GM12878 (cell line): ENCODE measurements at regions of chr20 and their contacts with region 1.

Region 1: DNA sequence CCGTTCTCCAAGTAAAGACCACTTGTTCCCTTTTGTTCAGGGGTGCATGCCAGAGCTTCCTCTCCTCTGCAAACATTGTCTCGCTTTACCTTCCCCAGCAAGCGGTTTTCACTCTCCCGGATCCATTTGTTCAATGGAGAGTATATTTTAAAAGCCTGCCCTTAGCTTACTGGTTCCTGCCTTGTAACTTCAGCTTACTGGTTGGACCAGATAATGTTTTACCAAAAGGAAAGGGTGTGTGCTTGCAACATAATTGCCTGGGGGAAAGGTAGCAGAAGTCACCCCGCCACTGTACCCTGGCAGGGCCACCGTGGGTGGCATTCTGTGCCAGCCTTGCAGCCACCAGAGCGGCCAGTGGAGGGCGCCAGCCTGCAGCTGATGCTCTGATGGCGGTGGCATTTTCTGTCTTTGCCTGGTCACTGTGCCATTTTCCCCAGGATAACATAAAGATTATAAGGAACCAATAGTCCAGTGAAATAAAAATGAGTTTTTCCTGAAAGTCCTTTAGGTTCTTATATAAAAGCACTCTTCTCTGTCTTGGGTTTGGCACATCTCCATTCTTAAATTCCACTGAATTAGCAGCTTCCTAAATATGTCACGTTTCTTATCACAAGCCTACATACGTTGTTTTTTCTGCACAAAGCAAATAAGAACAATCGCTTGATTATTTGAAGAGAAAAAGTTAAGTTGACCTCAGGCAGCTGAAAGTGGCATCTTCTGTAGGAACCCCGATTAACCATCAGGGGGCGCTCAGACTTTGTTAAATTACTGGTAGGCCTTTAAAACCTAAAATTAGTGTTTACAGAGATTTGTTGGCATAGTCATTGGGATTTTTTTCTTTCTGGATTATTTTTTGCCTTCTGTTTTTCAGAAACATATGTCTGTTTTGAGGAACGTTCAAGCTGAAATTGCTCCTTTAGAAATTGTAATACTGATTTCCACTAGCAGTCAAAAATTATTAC is 67.4 kb upstream of the XRN2 start:
- DNase-seq: no peak
- ATAC-seq: peak; percentile 82
- H3K4me3 ChIP-seq: no peak overlapping the region
- H3K27ac ChIP-seq: no peak overlapping the region
- H3K4me1 ChIP-seq: no peaks in the 10 kb centered on the region
- H3K27me3 ChIP-seq: no peaks in the 10 kb centered on the region
- CTCF ChIP-seq: peak; percentile 74 to 89 (median 78)
- EP300 ChIP-seq: no peak
- POLR2A ChIP-seq: no peak
- RAD21 ChIP-seq: peak; percentile 85

Region 2: GRCh38 chr20:20860078-20860806 is 375.5 kb before region 1 on chr20:
- CTCF ChIA-PET with region 1: interaction called, 27 read pairs
- POLR2A ChIA-PET with region 1: no interaction called
- RAD21 ChIA-PET with region 1: interaction called, 3 read pairs
- SMC1A ChIA-PET with region 1: interaction called, 8 read pairs
- in situ Hi-C with region 1: loop called (anchors 10 kb)
- intact Hi-C with region 1: loop called (anchors 10 kb)
- DNase-seq: peak; percentile 15
- ATAC-seq: peak; percentile 98
- H3K4me3 ChIP-seq: no peak overlapping the region
- H3K27ac ChIP-seq: no peak overlapping the region
- H3K4me1 ChIP-seq: no peaks in the 10 kb centered on the region
- H3K27me3 ChIP-seq: no peaks in the 10 kb centered on the region
- CTCF ChIP-seq: peak; percentile 85 to 94 (median 88)
- EP300 ChIP-seq: no peak
- POLR2A ChIP-seq: no peak
- RAD21 ChIP-seq: peak; percentile 84

Region 3: GRCh38 chr20:21141825-21142224 is 93.9 kb before region 1 on chr20:
- CTCF ChIA-PET with region 1: no interaction called
- POLR2A ChIA-PET with region 1: no interaction called
- RAD21 ChIA-PET with region 1: no interaction called
- SMC1A ChIA-PET with region 1: no interaction called
- in situ Hi-C with region 1: no loop called
- intact Hi-C with region 1: no loop called
- DNase-seq: no peak
- ATAC-seq: no peak
- H3K4me3 ChIP-seq: no peak overlapping the region
- H3K27ac ChIP-seq: no peak overlapping the region
- H3K4me1 ChIP-seq: peaks cover 4% of the 10 kb centered on the region
- H3K27me3 ChIP-seq: no peaks in the 10 kb centered on the region; a peak in 1 of 4 replicates
- CTCF ChIP-seq: no peak
- EP300 ChIP-seq: no peak
- POLR2A ChIP-seq: no peak
- RAD21 ChIP-seq: no peak

Region 4: GRCh38 chr20:21225215-21225947 is 10.4 kb before region 1 on chr20:
- CTCF ChIA-PET with region 1: interaction called, 15 read pairs
- POLR2A ChIA-PET with region 1: no interaction called
- RAD21 ChIA-PET with region 1: interaction called, 6 read pairs
- SMC1A ChIA-PET with region 1: no interaction called
- in situ Hi-C with region 1: no loop called
- intact Hi-C with region 1: no loop called
- DNase-seq: no peak
- ATAC-seq: no peak
- H3K4me3 ChIP-seq: no peak overlapping the region
- H3K27ac ChIP-seq: no peak overlapping the region
- H3K4me1 ChIP-seq: peaks cover 10% of the 10 kb centered on the region
- H3K27me3 ChIP-seq: no peaks in the 10 kb centered on the region
- CTCF ChIP-seq: no peak
- EP300 ChIP-seq: no peak
- POLR2A ChIP-seq: no peak
- RAD21 ChIP-seq: no peak

Region 5: DNA sequence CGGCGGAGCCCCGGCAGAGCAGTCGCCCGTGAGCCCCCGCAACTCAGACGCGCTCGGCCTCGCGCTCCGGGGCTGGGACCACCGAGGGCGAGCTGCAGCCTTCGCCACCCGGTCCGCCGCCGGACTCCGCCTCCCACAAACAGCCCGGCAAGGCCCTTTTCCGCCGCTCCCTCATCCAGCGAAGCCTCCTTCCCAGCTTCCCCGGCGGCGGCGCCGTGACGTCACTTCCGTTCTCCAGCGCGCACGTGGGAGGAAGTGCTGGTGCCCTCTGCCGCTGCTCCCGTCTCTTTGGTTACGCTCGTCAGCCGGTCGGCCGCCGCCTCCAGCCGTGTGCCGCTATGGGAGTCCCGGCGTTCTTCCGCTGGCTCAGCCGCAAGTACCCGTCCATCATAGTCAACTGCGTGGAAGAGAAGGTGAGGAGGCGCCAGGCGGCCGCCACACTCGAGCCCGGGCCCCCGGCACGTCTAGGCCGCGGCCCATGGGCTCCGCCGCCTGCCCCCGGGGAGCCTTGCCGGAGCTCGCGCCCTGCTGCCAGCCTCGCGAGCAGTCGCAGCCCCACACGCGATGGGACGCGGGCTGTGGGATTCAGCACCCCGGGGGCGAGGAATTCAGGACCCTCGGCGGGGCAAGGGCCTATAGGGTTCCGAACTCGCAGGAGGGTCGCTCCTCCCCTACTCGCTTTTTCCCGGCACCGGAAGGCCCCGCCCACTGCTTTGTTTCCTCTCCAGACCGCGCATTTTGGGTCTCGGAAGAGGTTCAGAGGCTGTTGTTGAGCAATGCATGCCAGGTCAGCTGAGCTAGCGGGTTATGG is 67.5 kb after region 1 on chr20 and contains the start of gene XRN2:
- CTCF ChIA-PET with region 1: interaction called, 14 read pairs
- POLR2A ChIA-PET with region 1: interaction called, 3 read pairs
- RAD21 ChIA-PET with region 1: interaction called, 4 read pairs
- SMC1A ChIA-PET with region 1: no interaction called
- in situ Hi-C with region 1: no loop called
- intact Hi-C with region 1: no loop called
- DNase-seq: peak; percentile 62
- ATAC-seq: peak; percentile 94
- H3K4me3 ChIP-seq: peak within 1 kb of the TSS; percentile 95
- H3K27ac ChIP-seq: peak within 1 kb of the TSS; percentile 90
- H3K4me1 ChIP-seq: no peaks in the 10 kb centered on the region
- H3K27me3 ChIP-seq: no peaks in the 10 kb centered on the region
- CTCF ChIP-seq: peak in 1 of 3 experiments; percentile 11; a peak in 1 of 6 replicates
- EP300 ChIP-seq: no peak
- POLR2A ChIP-seq: peak; percentile 97
- RAD21 ChIP-seq: no peak
- polyA plus RNA-seq, gene XRN2: 59.7 to 69.6 TPM

Region 6: DNA sequence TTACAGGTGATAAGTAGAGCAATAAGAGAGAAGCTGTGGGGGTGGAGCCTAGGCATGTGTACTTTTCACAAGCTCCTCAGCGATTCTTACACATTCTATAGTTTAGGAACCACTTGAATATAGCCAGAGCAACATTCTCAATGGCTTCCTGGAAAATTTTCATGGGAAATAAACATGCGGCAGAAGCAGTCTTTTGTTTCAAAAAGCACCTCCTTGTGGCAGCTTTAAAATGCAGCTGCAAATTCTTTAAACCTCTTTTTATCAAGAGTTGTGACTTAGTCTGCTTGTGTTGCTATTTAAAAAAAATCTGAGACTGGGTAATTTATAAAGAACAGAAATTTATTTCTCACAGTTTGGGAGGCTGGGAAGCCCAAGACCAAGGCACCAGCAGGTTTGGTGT is 254.3 kb after region 1 on chr20:
- CTCF ChIA-PET with region 1: interaction called, 27 read pairs
- POLR2A ChIA-PET with region 1: no interaction called
- RAD21 ChIA-PET with region 1: interaction called, 3 read pairs
- SMC1A ChIA-PET with region 1: interaction called, 8 read pairs
- in situ Hi-C with region 1: no loop called
- intact Hi-C with region 1: no loop called
- DNase-seq: no peak
- ATAC-seq: no peak
- H3K4me3 ChIP-seq: no peak overlapping the region
- H3K27ac ChIP-seq: no peak overlapping the region
- H3K4me1 ChIP-seq: no peaks in the 10 kb centered on the region
- H3K27me3 ChIP-seq: peaks cover 0 to 4% of the 10 kb centered on the region in 2 experiments; a peak in 3 of 4 replicates
- CTCF ChIP-seq: no peak
- EP300 ChIP-seq: no peak
- POLR2A ChIP-seq: no peak
- RAD21 ChIP-seq: no peak

Region 7: DNA sequence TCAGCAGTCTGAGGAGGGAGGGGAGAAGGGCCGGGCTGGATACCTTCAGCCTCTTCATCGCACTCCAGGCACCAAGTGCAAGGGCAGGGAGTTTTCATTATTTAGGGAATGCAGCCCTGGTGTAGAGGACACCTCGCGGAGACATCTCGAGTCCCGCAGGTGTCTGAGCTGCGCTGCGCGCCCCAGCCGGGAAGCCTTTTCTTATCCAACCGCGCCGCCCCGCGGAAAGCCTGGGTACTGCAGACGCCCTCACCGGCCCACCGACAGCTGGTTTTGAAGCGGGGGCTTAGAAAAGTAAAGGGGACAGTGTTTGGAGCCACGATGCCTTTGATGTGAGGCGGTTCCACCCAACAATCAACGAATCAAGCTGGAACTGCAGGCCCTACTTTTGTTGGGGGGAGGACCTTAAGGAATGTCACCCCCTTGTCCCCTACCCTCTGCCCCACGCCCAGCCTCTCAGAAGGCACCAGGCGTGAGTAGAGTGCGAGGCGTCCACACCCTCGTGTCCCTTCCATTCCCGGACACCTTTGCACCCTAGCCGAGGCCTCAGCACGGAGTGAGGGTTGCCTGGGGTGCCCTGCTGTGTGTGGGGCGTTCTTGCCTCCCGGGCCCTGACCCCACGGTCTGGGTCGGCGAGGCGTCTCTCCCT is 269.5 kb after region 1 on chr20:
- CTCF ChIA-PET with region 1: interaction called, 202 read pairs
- POLR2A ChIA-PET with region 1: interaction called, 3 read pairs
- RAD21 ChIA-PET with region 1: interaction called, 75 read pairs
- SMC1A ChIA-PET with region 1: interaction called, 94 read pairs
- in situ Hi-C with region 1: loop called (anchors 5 kb)
- intact Hi-C with region 1: loop called (anchors 1 kb)
- DNase-seq: no peak
- ATAC-seq: peak; percentile 70
- H3K4me3 ChIP-seq: no peak overlapping the region
- H3K27ac ChIP-seq: no peak overlapping the region
- H3K4me1 ChIP-seq: peaks cover 12% of the 10 kb centered on the region
- H3K27me3 ChIP-seq: peaks cover 13 to 22% of the 10 kb centered on the region in 2 experiments
- CTCF ChIP-seq: peak; percentile 98 to 99 (median 98); a peak in 5 of 6 replicates
- EP300 ChIP-seq: no peak
- POLR2A ChIP-seq: no peak
- RAD21 ChIP-seq: peak; percentile 98

Region 8: DNA sequence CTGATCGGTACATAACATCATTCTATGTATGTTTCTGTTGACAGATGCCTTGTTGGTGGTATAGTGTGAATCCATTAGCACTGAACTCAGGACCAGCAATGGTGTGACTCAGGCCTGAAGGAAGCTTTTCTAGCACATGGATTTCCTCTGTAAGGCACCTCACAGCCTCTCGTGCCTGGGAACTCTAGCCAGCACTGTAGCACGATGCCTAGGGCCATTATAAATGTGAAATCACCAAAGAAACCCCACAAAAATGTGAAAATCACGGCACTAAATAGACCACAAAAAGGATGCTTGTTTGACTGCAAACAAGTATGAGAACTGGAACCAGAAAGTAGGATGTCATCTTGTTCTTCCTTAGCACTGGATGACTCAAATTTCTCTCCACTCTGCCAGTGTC is 341.8 kb after region 1 on chr20:
- CTCF ChIA-PET with region 1: interaction called, 38 read pairs
- POLR2A ChIA-PET with region 1: interaction called, 5 read pairs
- RAD21 ChIA-PET with region 1: interaction called, 3 read pairs
- SMC1A ChIA-PET with region 1: interaction called, 22 read pairs
- in situ Hi-C with region 1: no loop called
- intact Hi-C with region 1: loop called (anchors 2 kb)
- DNase-seq: no peak
- ATAC-seq: no peak
- H3K4me3 ChIP-seq: no peak overlapping the region
- H3K27ac ChIP-seq: no peak overlapping the region
- H3K4me1 ChIP-seq: no peaks in the 10 kb centered on the region
- H3K27me3 ChIP-seq: peaks cover 0 to 3% of the 10 kb centered on the region in 2 experiments; a peak in 1 of 4 replicates
- CTCF ChIP-seq: no peak
- EP300 ChIP-seq: no peak
- POLR2A ChIP-seq: no peak
- RAD21 ChIP-seq: no peak